Endothelial cell of umbilical vein (primary cell): ENCODE measurements at regions of chr6 and their contacts with region 1.

Region 1: GRCh38 chr6:2237001-2237400 is 8.4 kb downstream of the GMDS start:
- DNase-seq: peak; percentile 87
- H3K4me3 ChIP-seq: no peak overlapping the region
- H3K27ac ChIP-seq: peak overlapping the region; percentile 40
- H3K4me1 ChIP-seq: peaks cover 12% of the 10 kb centered on the region
- H3K27me3 ChIP-seq: no peaks in the 10 kb centered on the region
- CTCF ChIP-seq: no peak
- POLR2A ChIP-seq: no peak

Region 2: DNA sequence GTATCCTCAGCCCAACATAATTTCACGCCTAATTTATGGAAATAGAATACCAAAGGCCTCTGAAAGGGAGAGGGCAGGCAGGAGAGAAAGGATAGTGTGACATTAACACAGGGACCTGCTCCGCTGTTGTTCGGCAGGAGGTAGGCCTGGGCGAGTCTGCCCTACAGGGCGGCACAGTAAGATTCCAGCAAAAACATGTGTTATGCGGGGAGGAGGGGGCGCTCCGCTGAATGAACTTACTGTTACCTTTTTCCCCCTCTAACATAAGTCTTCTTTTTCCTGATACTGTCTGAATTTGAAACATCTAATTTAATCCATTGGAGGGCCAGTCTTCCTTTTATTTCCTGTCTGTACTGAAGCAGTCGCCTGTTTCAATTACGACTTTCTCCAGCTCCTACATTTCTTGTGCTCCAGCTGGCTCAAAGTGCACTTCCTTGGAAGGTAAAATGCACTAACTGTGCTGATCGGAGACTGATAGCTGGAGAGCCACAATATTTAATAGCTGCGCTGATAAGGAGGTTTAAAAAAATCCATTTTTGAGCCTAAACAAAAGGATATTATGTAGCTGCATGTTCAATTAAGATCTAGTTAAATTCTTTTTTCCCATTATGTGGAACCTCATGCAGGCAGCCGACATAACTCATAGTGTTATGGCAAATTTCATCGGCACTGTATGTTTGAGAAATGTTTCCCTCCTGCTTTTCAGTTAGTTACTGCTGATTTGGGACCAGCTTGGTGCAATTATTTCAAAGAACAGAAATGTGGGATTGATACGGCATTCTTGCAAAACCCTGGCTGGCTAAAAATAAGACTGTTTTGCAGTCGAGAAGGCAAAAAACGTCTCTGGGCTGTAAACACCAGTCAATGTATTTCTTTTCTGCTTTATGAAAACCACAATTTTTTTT is 434.3 kb before region 1 on chr6:
- CTCF ChIA-PET with region 1: no interaction called
- POLR2A ChIA-PET with region 1: no interaction called
- dilution Hi-C with region 1: no loop called
- intact Hi-C with region 1: no loop called
- DNase-seq: peak; percentile 79
- H3K4me3 ChIP-seq: no peak overlapping the region
- H3K27ac ChIP-seq: peak overlapping the region; percentile 15
- H3K4me1 ChIP-seq: peaks cover 15% of the 10 kb centered on the region
- H3K27me3 ChIP-seq: no peaks in the 10 kb centered on the region
- CTCF ChIP-seq: no peak
- POLR2A ChIP-seq: no peak

Region 3: GRCh38 chr6:2203264-2203663 is 33.7 kb before region 1 on chr6:
- CTCF ChIA-PET with region 1: interaction called, 18 read pairs
- POLR2A ChIA-PET with region 1: no interaction called
- dilution Hi-C with region 1: no loop called
- intact Hi-C with region 1: no loop called
- DNase-seq: peak; percentile 94
- H3K4me3 ChIP-seq: no peak overlapping the region
- H3K27ac ChIP-seq: peak overlapping the region; percentile 72
- H3K4me1 ChIP-seq: peaks cover 17% of the 10 kb centered on the region
- H3K27me3 ChIP-seq: no peaks in the 10 kb centered on the region
- CTCF ChIP-seq: no peak
- POLR2A ChIP-seq: no peak

Region 4: DNA sequence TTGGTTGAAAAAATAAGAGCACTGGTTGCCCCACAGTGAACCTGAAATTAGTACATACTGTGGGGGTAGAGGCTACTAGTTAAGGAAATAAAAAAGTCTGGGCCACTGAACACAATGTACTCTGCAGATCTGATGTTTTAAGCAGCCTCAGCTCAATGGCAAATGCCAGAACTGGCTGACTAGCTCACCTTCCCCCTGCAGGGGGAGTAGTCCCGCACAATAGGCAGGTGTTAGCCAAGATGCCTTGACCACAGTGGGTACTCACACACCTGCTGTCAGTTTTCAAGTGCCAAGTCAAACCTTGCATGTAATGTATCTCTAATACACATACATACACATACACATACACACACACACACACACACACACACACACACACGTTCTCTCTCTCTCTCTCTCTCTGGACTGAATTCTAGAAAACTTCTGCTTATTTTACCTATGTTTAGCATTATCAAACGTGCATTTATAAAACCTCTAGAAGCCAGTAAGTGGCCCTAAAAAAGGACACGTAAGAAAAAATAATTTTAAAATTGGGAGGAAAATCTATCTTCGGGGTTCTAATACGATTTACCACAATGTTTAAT is 27.7 kb before region 1 on chr6:
- CTCF ChIA-PET with region 1: interaction called, 18 read pairs
- POLR2A ChIA-PET with region 1: no interaction called
- dilution Hi-C with region 1: no loop called
- intact Hi-C with region 1: no loop called
- DNase-seq: peak; percentile 64
- H3K4me3 ChIP-seq: no peak overlapping the region
- H3K27ac ChIP-seq: no peak overlapping the region
- H3K4me1 ChIP-seq: no peaks in the 10 kb centered on the region
- H3K27me3 ChIP-seq: no peaks in the 10 kb centered on the region
- CTCF ChIP-seq: peak; percentile 42 to 75
- POLR2A ChIP-seq: no peak

Region 5: GRCh38 chr6:2221726-2222274 is 15.2 kb before region 1 on chr6:
- CTCF ChIA-PET with region 1: interaction called, 11 read pairs
- POLR2A ChIA-PET with region 1: no interaction called
- dilution Hi-C with region 1: no loop called
- intact Hi-C with region 1: no loop called
- DNase-seq: no peak
- H3K4me3 ChIP-seq: peak overlapping the region; percentile 49 to 85 (median 62)
- H3K27ac ChIP-seq: peak overlapping the region; percentile 43
- H3K4me1 ChIP-seq: peaks cover 21% of the 10 kb centered on the region
- H3K27me3 ChIP-seq: no peaks in the 10 kb centered on the region
- CTCF ChIP-seq: no peak
- POLR2A ChIP-seq: no peak